Breast epithelium (tissue), 4 donors: ENCODE measurements at regions of chr15 and their contacts with region 1.

Region 1: GRCh38 chr15:58309963-58310928 is 121.5 kb upstream of the LIPC start:
- DNase-seq: peak in 1 of 2 donors; percentile 70
- H3K4me3 ChIP-seq: no peak overlapping the region
- H3K27ac ChIP-seq: peak overlapping the region; percentile 76 to 77
- H3K4me1 ChIP-seq: no peaks in the 10 kb centered on the region
- H3K27me3 ChIP-seq: no peaks in the 10 kb centered on the region
- CTCF ChIP-seq: no peak
- POLR2A ChIP-seq: no peak

Region 2: GRCh38 chr15:58380280-58380945 is 70.2 kb after region 1 on chr15:
- intact Hi-C with region 1: loop called (anchors 2 kb)
- DNase-seq: no peak
- H3K4me3 ChIP-seq: no peak overlapping the region
- H3K27ac ChIP-seq: no peak overlapping the region
- H3K4me1 ChIP-seq: no peaks in the 10 kb centered on the region
- H3K27me3 ChIP-seq: no peaks in the 10 kb centered on the region
- CTCF ChIP-seq: no peak
- POLR2A ChIP-seq: no peak

Region 3: GRCh38 chr15:59532770-59533379 is 1222.6 kb after region 1 on chr15:
- intact Hi-C with region 1: loop called (anchors 5 kb)
- DNase-seq: no peak
- H3K4me3 ChIP-seq: no peak overlapping the region
- H3K27ac ChIP-seq: no peak overlapping the region
- H3K4me1 ChIP-seq: no peaks in the 10 kb centered on the region
- H3K27me3 ChIP-seq: no peaks in the 10 kb centered on the region
- CTCF ChIP-seq: peak; percentile 54 to 65 (median 54)
- POLR2A ChIP-seq: no peak